Endothelial cell of umbilical vein (primary cell): ENCODE measurements at regions of chr11 and their contacts with region 1.

Region 1: GRCh38 chr11:83836883-83837654 is 550.9 kb upstream of the CCDC90B start:
- DNase-seq: peak; percentile 27
- H3K4me3 ChIP-seq: no peak overlapping the region
- H3K27ac ChIP-seq: no peak overlapping the region
- H3K4me1 ChIP-seq: no peaks in the 10 kb centered on the region
- H3K27me3 ChIP-seq: peaks cover 0 to 6% of the 10 kb centered on the region in 2 experiments
- CTCF ChIP-seq: peak; percentile 50 to 65
- POLR2A ChIP-seq: no peak

Region 2: DNA sequence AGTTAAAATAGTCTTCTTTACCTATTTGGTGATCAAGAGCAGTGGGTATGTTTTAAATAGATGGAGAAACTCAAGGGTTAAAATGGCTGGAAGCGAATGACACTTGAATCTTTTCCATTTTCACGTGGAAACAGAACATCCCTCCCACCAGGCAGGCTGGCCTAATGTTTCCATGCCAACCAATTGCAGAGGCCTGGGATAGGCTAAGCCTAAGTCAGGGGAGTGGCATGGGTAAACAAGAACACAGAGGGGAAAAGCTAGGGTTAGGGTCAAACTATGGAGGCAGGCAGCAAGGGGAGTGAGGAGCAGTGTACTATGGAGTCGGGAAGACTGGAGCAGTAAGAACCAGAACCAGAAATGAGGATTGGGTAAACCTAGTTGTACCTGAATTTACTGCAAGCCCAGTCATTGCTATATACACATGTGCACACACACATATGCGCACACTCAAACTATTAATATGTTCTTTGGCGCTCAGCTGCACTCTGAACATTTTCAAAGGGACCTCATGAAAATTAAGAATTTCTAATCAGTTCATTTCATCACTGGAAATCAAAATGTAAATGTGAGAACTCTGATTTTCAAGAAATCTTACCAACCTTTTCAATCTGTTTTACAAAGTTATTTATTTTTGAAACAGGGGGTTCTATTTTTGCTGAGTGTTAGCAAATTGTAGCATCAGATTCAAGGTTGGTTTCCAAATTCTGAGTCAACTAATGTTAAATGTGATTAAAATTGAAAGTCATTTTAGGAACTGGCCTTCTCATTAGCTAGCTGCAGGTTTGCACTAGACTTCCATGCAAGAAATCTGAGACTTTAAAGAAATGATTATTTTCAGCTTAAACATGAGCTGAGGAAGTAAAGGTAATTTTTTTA is 223.9 kb before region 1 on chr11:
- CTCF ChIA-PET with region 1: no interaction called
- POLR2A ChIA-PET with region 1: no interaction called
- dilution Hi-C with region 1: no loop called
- intact Hi-C with region 1: no loop called
- DNase-seq: no peak
- H3K4me3 ChIP-seq: no peak overlapping the region
- H3K27ac ChIP-seq: no peak overlapping the region
- H3K4me1 ChIP-seq: no peaks in the 10 kb centered on the region
- H3K27me3 ChIP-seq: no peaks in the 10 kb centered on the region
- CTCF ChIP-seq: no peak
- POLR2A ChIP-seq: no peak

Region 3: DNA sequence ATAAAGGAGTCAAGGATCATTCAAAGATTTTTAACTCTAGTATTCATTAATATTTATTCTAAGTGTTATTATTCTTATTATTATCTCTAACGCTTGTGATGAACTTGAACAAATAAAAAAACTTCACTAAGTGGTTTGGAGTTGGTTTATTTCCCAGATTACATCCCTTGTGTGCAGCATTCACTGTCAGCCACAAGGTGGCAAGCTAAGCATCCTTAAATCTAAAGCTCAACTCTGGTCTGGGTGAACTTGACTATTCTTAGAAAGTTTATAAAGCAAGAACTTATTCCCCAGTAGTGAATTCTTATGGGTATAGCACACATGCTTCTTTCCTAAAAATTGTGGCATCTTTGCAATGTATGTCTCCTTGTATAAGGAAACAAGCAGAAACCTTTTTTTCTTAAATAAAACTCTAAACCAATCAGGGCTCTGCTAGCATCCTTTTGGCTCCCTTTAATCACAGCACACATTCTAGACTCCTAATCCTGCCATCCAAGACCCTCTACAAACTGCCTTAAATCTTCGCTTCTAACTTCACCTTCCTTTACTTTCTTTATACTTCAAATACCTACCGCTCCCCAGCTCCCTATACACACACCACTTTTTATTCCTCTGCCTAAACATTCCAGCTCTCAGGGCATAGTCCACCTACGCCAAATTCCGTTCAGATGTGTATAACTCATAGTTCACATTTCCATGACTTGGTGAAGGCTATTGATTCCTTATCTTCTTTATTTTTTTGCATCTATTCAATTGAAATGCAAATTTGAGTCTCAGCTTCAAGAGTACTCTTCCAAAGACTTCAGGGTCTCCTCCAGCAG is 721.2 kb after region 1 on chr11:
- CTCF ChIA-PET with region 1: interaction called, 10 read pairs
- POLR2A ChIA-PET with region 1: no interaction called
- dilution Hi-C with region 1: no loop called
- intact Hi-C with region 1: no loop called
- DNase-seq: peak; percentile 35
- H3K4me3 ChIP-seq: no peak overlapping the region
- H3K27ac ChIP-seq: no peak overlapping the region
- H3K4me1 ChIP-seq: no peaks in the 10 kb centered on the region
- H3K27me3 ChIP-seq: no peaks in the 10 kb centered on the region
- CTCF ChIP-seq: peak; percentile 48 to 63
- POLR2A ChIP-seq: no peak

Region 4: GRCh38 chr11:84564180-84564866 is 727.3 kb after region 1 on chr11:
- CTCF ChIA-PET with region 1: interaction called, 15 read pairs
- POLR2A ChIA-PET with region 1: no interaction called
- dilution Hi-C with region 1: no loop called
- intact Hi-C with region 1: loop called (anchors 2 kb)
- DNase-seq: peak; percentile 55
- H3K4me3 ChIP-seq: no peak overlapping the region
- H3K27ac ChIP-seq: no peak overlapping the region
- H3K4me1 ChIP-seq: no peaks in the 10 kb centered on the region
- H3K27me3 ChIP-seq: no peaks in the 10 kb centered on the region
- CTCF ChIP-seq: peak; percentile 52 to 67
- POLR2A ChIP-seq: no peak